Ovary (tissue), 10 donors: ENCODE measurements at regions of chr16 and their contacts with region 1.

Region 1: GRCh38 chr16:19236561-19237209 is 48.8 kb upstream of the CLEC19A start:
- DNase-seq: no peak
- H3K4me3 ChIP-seq: no peak overlapping the region
- H3K27ac ChIP-seq: no peak overlapping the region
- H3K4me1 ChIP-seq: no peaks in the 10 kb centered on the region
- H3K27me3 ChIP-seq: no peaks in the 10 kb centered on the region
- CTCF ChIP-seq: no peak
- EP300 ChIP-seq: no peak
- POLR2A ChIP-seq: no peak

Region 2: GRCh38 chr16:17612336-17612735 is 1624.3 kb before region 1 on chr16:
- intact Hi-C with region 1: loop called in 1 of 4 experiments (anchors 10 kb)
- DNase-seq: no peak
- H3K4me3 ChIP-seq: no peak overlapping the region
- H3K27ac ChIP-seq: no peak overlapping the region
- H3K4me1 ChIP-seq: no peaks in the 10 kb centered on the region
- H3K27me3 ChIP-seq: no peaks in the 10 kb centered on the region
- CTCF ChIP-seq: no peak
- EP300 ChIP-seq: no peak
- POLR2A ChIP-seq: no peak

Region 3: DNA sequence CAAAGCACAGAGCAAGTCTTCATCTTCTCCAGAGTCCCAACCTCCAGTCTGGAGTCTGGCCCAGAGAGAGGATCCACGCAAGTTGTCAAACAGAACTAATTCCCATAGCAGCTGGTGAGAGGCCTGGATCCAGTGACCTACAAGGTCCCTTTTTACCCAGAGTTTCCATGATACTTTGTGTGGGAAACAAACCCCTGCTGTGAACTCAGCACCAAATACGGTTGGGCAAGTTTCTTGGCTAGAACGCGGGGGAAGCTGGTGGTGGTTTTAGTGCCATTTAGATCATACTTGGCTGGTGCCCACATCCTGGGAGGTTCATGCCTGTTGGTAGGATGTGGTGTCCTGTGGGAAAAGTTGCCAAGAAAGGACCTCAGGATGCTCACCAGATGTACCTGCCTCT is 234.9 kb before region 1 on chr16:
- intact Hi-C with region 1: no loop called
- DNase-seq: no peak
- H3K4me3 ChIP-seq: no peak overlapping the region
- H3K27ac ChIP-seq: no peak overlapping the region
- H3K4me1 ChIP-seq: no peaks in the 10 kb centered on the region
- H3K27me3 ChIP-seq: no peaks in the 10 kb centered on the region
- CTCF ChIP-seq: no peak
- EP300 ChIP-seq: no peak
- POLR2A ChIP-seq: no peak

Region 4: DNA sequence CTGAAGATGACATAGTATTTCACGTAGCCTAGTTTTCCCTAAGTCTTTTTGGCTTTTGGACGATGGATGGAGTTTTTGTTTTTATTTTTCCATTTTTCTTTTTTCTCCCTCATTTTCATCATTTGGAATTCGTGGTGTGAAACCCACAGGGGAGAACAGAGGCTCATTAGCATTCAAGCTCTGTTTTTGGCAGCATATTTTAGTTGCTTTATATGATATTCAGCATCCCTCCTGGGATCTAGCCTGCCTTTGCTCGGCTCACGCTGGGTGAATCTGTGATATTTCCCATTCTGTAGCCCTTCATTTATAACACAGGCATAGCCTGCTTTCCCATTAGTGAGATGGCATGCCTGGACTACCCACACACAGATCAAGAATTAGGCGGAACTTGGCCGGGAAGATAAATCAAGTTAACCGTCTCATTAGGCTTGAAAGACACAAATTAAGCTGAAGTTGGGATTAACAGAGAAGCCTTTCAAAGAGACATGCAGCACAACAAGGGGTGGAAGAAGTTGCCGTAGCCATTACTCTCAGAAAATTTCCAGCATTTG is 28.8 kb after region 1 on chr16:
- intact Hi-C with region 1: no loop called
- DNase-seq: no peak
- H3K4me3 ChIP-seq: no peak overlapping the region
- H3K27ac ChIP-seq: no peak overlapping the region
- H3K4me1 ChIP-seq: no peaks in the 10 kb centered on the region
- H3K27me3 ChIP-seq: no peaks in the 10 kb centered on the region
- CTCF ChIP-seq: no peak
- EP300 ChIP-seq: no peak
- POLR2A ChIP-seq: no peak